OCI-LY7 (cell line): ENCODE measurements at regions of chr10 and their contacts with region 1.

Region 1: GRCh38 chr10:112271982-112272381 is 11.2 kb upstream of the TECTB start:
- DNase-seq: no peak
- H3K4me3 ChIP-seq: no peak overlapping the region
- H3K27ac ChIP-seq: no peak overlapping the region
- H3K4me1 ChIP-seq: no peaks in the 10 kb centered on the region
- CTCF ChIP-seq: no peak

Region 2: GRCh38 chr10:112250555-112250954 is 21.4 kb before region 1 on chr10:
- CTCF ChIA-PET with region 1: no interaction called
- POLR2A ChIA-PET with region 1: no interaction called
- intact Hi-C with region 1: no loop called
- DNase-seq: no peak
- H3K4me3 ChIP-seq: no peak overlapping the region
- H3K27ac ChIP-seq: no peak overlapping the region
- H3K4me1 ChIP-seq: no peaks in the 10 kb centered on the region
- CTCF ChIP-seq: no peak

Region 3: GRCh38 chr10:112288486-112288885 is 16.5 kb after region 1 on chr10:
- CTCF ChIA-PET with region 1: no interaction called
- POLR2A ChIA-PET with region 1: no interaction called
- intact Hi-C with region 1: no loop called
- DNase-seq: no peak
- H3K4me3 ChIP-seq: no peak overlapping the region
- H3K27ac ChIP-seq: no peak overlapping the region
- H3K4me1 ChIP-seq: no peaks in the 10 kb centered on the region
- CTCF ChIP-seq: no peak

Region 4: GRCh38 chr10:112429147-112429546 is 157.2 kb after region 1 on chr10:
- CTCF ChIA-PET with region 1: no interaction called
- POLR2A ChIA-PET with region 1: no interaction called
- intact Hi-C with region 1: no loop called
- DNase-seq: peak; percentile 3
- H3K4me3 ChIP-seq: no peak overlapping the region
- H3K27ac ChIP-seq: no peak overlapping the region
- H3K4me1 ChIP-seq: no peaks in the 10 kb centered on the region
- CTCF ChIP-seq: no peak

Region 5: DNA sequence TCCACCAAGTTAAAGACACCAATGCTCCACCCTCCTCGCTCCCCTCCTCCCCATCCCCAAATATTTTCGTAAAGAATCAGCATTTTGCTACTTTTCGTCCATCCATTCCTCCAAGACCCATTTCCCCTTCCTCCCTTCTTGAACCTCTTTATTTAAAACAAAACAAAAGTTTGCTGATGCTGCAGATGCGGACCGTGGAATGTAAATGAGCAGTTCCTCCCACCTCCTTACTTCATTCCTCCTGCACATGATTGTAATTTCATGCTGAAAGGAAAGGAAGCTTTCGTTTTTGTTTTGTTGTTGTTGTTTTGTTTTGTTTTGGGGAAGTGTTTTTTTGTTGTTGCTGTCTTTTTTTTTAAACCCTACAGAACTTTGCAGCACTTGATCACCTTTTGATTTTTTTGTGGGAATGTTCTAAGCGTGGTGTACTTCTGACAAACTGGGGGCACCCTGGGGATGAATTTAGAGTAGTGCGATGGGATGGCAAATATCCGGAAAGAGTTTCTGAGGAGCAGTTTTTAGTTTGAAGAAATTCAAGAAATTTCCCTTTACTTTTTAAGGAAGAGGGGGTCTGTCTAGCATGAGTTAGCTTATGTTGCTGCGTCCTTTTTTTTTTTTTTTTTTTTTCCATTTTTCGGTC is 855.4 kb after region 1 on chr10:
- CTCF ChIA-PET with region 1: no interaction called
- POLR2A ChIA-PET with region 1: interaction called, 10 read pairs
- intact Hi-C with region 1: no loop called
- DNase-seq: no peak
- H3K4me3 ChIP-seq: no peak overlapping the region
- H3K27ac ChIP-seq: no peak overlapping the region
- H3K4me1 ChIP-seq: no peaks in the 10 kb centered on the region
- CTCF ChIP-seq: no peak